ENCODE measurements at regions of chr3 and their contacts with region 1.

Region 1: DNA sequence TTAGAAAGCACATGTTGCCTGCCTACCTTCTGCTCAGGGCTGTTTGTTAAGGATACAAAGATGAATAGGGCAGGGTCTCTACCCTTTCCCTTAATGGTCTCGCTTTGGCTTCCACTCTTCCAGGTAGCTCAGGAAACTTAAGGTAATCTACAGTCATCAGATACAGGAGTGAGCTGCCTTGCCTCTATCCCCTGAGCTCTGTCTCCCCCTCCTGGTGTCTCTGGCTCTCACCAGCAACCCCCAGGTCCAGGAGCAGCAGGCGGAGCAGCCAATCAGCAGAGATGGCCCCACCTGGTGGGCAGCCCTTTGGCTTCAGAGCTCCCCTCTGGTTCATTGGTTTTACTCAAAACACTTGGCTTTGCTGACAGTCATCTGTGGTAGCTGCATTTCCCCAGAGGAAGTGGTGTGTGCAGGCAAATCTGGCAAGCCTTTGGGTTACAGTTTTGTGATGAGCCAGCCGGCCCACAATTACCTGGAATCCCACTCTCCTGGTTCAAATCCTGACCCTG is 8.5 kb upstream of the CX3CR1 start:
- DNase-seq: peak; percentile 94
- ATAC-seq: peak; percentile 98
- H3K4me3 Mint-ChIP-seq: no peak overlapping the region
- H3K27ac Mint-ChIP-seq: no peak overlapping the region
- H3K4me1 Mint-ChIP-seq: peaks cover 5% of the 10 kb centered on the region
- H3K27me3 Mint-ChIP-seq: no peaks in the 10 kb centered on the region
- CTCF ChIP-seq: peak; percentile 47; the same call in 1 of the 2 replicates

Region 2: DNA sequence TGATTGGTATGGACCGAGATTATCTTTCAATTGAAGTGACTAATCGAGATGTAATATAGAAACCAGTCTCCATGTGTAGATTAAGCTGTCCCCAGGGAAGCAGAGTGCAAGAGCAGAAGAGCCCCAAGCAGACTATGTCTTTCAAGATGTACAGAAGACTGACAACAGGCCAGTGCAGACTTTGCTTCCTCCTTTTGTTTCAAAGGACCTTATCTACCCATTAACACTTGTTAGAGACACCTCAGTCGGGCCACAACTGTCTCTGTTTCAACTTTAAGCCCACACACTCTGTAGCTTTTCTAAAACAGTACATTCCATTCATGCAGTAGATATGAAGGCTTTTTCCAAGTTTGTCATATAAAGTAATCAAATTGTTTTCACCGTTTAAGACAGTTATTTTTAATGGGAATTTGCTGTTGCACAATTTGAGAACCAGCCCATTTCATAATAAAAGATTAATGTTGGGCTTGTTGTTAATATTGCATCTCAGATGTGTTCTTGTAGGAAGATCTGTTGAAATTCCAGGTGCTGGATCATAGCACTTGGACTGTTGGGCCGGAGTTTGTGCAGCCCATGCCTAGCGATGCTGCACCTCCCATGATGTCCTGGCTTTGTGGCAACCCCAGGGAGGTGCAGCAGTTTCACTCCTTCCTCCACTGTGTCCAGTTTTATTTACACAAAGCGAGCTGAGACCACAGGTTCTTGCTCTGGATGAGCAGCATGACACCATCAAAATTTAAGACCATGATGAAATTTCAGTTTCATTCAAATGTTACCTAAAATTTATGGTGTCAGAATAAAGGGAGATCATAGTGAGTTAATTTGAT is 193.3 kb before region 1 on chr3:
- CTCF ChIA-PET with region 1: interaction called, 10 read pairs
- POLR2A ChIA-PET with region 1: no interaction called
- DNase-seq: no peak
- ATAC-seq: no peak
- H3K4me3 Mint-ChIP-seq: no peak overlapping the region
- H3K27ac Mint-ChIP-seq: no peak overlapping the region
- H3K4me1 Mint-ChIP-seq: no peaks in the 10 kb centered on the region
- H3K27me3 Mint-ChIP-seq: no peaks in the 10 kb centered on the region
- CTCF ChIP-seq: no peak

Region 3: DNA sequence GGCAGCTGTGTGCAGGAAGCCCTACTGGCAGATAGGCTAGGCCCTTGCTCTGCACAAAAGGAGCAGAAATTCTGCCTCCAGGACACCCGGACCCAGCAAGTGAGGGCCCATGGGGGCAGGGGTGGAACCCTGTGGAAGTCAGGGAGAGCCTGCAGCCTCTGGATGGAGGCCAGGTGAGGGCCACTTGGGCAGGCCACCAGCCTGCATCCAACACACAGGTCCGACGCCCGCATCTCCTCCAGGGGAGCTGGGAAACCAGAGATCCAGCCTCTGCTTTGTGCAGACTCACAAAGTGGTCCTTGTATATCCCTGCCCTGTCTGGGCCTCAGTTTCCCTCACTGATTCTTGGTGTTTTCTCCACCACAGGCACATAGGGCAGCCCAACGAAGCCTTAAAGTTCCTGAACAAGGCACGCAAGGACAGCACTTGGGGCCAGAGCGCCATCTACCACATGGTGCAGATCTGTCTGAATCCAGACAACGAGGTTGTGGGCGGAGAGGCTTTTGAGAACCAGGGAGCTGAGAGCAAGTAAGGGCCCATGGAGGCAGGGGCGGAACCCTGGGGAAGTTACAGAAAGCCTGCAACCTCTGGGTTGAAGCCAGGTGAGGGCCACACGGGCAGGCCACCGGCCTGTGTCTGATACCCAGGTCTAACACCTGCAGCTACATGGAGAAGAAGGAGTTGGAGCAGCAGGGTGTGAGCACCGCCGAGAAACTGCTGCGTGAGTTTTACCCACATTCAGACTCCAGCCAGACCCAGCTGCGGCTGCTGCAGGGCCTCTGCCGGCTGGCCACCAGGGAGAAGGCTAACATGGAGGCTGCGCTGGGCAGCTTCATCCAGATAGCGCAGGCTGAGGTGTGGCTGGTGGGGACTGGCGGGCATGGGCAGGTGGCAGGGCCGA is 151.6 kb before region 1 on chr3:
- CTCF ChIA-PET with region 1: interaction called, 15 read pairs
- POLR2A ChIA-PET with region 1: no interaction called
- DNase-seq: no peak
- ATAC-seq: peak; percentile 31
- H3K4me3 Mint-ChIP-seq: no peak overlapping the region
- H3K27ac Mint-ChIP-seq: no peak overlapping the region
- H3K4me1 Mint-ChIP-seq: peaks cover 4% of the 10 kb centered on the region
- H3K27me3 Mint-ChIP-seq: no peaks in the 10 kb centered on the region
- CTCF ChIP-seq: no peak

Region 4: DNA sequence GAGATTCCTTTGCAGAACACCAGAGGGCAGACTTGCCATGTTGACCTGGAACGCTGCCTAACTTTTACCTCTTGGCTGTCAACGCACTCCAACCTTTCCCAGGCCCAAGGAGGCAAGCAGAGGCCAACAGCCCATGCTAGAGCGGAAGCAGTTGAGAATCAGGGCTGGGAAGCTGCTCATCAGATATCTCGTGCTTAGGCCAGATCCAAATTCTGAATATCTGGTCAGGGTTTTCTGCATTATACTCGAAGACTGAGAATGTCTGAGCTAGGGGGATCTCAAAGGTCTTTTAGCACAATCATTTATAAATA is 98.4 kb before region 1 on chr3:
- CTCF ChIA-PET with region 1: interaction called, 291 read pairs
- POLR2A ChIA-PET with region 1: interaction called, 3 read pairs
- DNase-seq: peak; percentile 73
- ATAC-seq: peak; percentile 85
- H3K4me3 Mint-ChIP-seq: no peak overlapping the region
- H3K27ac Mint-ChIP-seq: no peak overlapping the region
- H3K4me1 Mint-ChIP-seq: 0 out of 2 replicates have a peak, but pooled peaks cover 4% of the 10 kb centered on the region
- H3K27me3 Mint-ChIP-seq: no peaks in the 10 kb centered on the region; the same call in 1 of the 2 replicates
- CTCF ChIP-seq: peak; percentile 63; the same call in 1 of the 2 replicates

Region 5: DNA sequence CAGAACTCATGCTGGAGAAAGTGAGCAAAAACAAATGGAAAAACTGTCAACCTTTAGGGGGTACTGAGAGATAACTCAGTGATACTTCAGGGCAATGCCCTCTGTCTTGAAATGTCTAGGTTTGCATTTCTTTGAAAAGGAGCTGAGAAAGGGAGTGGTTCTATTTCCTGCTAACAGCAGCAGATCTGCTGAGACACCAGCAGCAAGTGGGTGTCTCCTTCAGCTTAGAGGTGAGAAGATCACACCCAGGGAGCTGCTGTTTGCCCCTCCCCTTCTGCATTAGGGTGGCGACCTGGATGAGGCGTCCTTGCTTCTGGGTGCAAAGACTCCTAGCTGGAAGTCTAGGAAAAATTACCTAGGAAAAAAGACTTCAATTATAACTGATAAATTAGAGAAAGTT is 53.6 kb before region 1 on chr3:
- CTCF ChIA-PET with region 1: interaction called, 22 read pairs
- POLR2A ChIA-PET with region 1: no interaction called
- DNase-seq: no peak
- ATAC-seq: peak; percentile 20; the same call in 1 of the 2 replicates
- H3K4me3 Mint-ChIP-seq: no peak overlapping the region
- H3K27ac Mint-ChIP-seq: no peak overlapping the region
- H3K4me1 Mint-ChIP-seq: peaks cover 4% of the 10 kb centered on the region
- H3K27me3 Mint-ChIP-seq: peaks cover 2% of the 10 kb centered on the region; the same call in 1 of the 2 replicates
- CTCF ChIP-seq: no peak

Region 6: DNA sequence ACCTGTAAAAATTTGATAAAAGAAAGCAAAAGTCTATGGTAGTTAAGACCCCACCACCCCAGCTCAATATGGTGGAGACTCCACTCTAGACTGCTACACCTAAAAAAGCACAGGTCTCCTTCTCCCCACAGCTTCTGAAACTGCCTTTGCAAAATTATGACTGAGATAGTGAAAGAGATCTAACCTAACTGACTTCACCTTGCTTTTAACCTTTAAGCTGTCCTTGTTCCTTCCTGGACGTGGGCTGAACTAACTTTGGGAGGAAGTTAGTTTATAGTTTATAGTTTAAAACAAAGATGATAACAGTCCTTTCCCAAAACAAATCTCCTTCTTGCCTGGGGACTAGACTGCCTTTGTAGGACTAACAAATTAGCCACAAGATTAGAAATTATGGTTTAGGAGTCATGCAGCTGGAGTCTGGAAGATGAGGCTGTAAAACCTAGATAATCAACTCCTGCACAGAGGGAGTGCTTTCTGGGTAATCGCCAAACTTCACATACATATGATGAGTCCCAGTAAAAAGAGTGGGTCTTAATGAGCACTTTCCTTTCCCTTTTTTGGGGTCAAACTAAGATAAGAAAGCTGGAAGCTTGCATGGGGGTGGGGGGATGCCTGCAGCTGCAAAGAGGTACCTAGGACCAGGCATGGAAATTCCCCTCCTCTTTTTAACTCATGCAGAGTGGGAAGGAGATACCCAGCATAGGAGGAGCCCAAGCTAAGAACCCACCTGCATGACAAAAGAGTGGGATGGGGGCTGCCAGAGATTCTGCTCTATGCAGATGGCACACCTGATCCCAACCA is 58.6 kb after region 1 on chr3:
- CTCF ChIA-PET with region 1: interaction called, 18 read pairs
- POLR2A ChIA-PET with region 1: no interaction called
- DNase-seq: no peak
- ATAC-seq: peak; percentile 92
- H3K4me3 Mint-ChIP-seq: no peak overlapping the region
- H3K27ac Mint-ChIP-seq: no peak overlapping the region
- H3K4me1 Mint-ChIP-seq: peaks cover 35% of the 10 kb centered on the region
- H3K27me3 Mint-ChIP-seq: no peaks in the 10 kb centered on the region
- CTCF ChIP-seq: no peak

Region 7: DNA sequence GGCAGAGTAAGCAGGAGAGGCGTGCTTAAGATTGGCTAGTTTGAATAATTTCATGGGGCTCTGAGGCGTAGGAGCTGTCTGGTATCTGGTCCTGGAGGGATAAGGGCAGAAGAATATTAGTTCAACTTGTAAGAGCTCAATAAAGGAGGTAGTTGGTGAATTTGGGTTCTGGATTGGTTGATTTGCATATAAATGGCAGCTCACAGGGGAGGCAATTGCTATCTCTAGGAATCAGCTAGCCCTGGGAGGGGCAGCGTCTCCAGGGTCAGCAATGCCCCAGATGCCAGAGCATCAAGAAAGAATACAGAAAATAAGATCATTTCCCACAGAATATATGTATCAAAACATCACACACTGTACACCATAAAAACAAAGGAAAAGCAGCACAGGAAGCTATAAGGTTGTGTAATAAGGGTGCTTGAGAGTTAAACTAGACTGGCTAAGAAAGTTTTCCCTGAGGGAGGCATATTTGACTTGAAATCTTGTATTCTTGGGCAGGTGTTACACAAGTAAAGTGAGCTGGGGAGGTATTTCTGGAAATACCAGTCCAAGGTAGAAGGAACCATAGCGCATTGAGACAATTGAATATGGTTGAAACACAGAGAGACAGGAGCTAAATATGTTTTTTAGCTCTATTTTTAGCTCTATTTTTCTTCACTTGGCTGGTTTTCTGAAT is 185.2 kb after region 1 on chr3:
- CTCF ChIA-PET with region 1: no interaction called
- POLR2A ChIA-PET with region 1: no interaction called
- DNase-seq: no peak
- ATAC-seq: peak; percentile 94
- H3K4me3 Mint-ChIP-seq: no peak overlapping the region
- H3K27ac Mint-ChIP-seq: peak overlapping the region; percentile 36; the same call in 1 of the 2 replicates
- H3K4me1 Mint-ChIP-seq: peaks cover 15% of the 10 kb centered on the region
- H3K27me3 Mint-ChIP-seq: no peaks in the 10 kb centered on the region; the same call in 1 of the 2 replicates
- CTCF ChIP-seq: no peak

Measured in WTC11 (cell line).